Right ventricle myocardium inferior (tissue), 1 donor: ENCODE measurements at regions of chr4 and their contacts with region 1.

Region 1: DNA sequence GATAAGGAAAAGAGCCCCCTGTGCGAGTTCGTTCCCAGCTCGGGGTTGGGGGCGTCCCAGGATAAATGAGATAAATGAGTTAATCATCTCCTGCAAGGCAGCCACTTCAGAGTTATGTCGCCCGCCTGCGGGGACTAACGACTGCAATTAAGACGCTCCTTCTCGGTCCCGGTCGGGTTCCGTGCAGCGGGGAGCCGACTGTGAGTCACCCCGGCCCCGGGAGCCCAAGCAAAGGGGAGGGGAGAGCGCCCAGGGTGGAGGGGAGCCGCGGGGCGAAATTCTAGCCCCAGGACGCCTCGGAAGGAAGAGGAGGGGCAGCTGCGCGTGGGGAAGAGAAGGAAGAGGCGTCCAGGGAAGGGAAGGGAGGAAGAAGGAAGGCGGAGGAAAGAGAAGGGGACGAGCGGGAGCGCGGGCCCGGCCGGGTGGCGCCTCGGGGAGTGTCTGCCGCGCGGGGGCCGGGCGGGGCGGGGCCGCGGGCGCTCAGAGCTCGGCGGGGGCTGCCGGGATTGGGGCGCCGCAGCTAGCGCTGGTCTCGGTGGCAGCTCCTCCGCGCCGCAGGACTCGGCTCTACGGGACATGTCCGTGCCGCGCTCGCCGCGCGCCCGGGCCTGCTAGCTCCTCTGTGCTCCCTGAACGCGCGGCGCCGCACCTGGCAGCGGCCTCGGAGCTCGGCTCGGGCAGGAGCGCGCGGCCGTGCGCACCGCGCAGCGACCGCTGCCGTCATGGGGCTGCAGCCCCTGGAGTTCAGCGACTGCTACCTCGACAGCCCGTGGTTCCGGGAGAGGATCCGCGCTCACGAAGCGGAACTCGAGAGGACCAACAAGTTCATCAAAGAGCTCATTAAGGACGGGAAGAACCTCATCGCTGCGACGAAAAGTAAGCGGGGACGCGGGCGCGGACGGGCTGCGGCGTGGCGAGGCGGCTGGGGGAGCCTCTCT is at the start of gene ARHGAP10:
- DNase-seq: peak; percentile 91
- ATAC-seq: peak; percentile 82
- total RNA-seq, gene ARHGAP10: 71.8 TPM

Region 2: GRCh38 chr4:147753047-147753446 is 21.2 kb after region 1 on chr4:
- intact Hi-C with region 1: loop called (anchors 2 kb)
- DNase-seq: no peak
- ATAC-seq: peak; percentile 37

Region 3: DNA sequence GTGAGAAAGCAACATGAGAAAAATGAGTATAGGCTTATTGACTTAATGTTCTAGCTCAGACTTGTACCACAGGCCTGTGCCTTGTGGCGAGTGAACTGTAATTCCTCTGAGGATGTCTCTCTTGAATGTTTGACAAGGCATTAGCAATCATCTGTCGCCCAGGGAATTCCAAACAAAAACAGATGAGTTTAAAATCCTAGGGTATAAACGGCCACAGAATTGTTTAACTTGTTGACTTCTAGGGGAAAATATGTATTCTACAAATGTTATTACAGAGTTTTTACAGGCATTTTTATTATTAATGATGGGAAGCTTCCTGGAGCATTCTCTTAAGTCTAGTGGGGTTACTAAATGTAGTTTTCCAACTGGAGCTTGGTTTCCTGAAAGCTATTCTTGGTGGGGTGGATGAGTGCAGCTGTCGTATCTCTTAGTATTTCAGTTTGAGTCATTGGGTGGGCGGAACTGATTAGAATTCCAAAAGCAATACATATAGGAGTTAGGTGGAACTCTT is 40.7 kb after region 1 on chr4:
- intact Hi-C with region 1: loop called (anchors 5 kb)
- DNase-seq: no peak
- ATAC-seq: peak; percentile 51

Region 4: GRCh38 chr4:147786031-147786430 is 54.2 kb after region 1 on chr4:
- intact Hi-C with region 1: loop called (anchors 5 kb)
- DNase-seq: no peak
- ATAC-seq: no peak

Region 5: DNA sequence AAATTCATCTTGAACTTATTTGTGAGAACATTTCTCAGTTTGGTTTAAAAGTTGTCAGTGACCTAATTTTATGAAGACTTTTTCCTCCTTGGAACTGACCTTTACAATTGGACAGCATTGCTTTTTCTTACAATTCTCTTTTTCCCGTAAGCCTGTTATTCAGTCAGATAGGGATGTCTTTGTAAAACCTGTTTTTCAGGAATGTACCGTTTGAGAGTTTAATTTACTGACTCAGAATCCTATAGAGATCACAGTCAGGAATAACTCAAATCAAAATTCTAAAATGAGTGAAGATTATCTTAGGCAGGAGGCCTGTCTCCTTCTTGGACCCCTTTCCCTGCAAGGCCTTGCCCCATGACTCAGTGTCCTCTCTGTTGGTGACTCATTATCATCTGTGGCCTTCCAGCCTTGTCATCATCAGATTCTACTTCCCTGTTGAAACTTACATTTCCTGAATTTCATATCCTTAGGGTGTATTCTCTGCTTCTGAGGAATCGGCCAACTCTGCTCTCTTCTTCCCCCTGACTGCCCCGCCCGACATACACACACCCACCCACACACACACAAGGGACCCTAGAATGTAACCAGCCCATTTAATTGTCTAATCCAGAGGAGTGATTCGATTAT is 99.8 kb after region 1 on chr4:
- intact Hi-C with region 1: loop called (anchors 2 kb)
- DNase-seq: no peak
- ATAC-seq: peak; percentile 74

Region 6: GRCh38 chr4:147866532-147867271 is 134.9 kb after region 1 on chr4:
- intact Hi-C with region 1: loop called (anchors 2 kb)
- DNase-seq: peak; percentile 88
- ATAC-seq: peak; percentile 90